ENCODE measurements at regions of chr1 and their contacts with region 1.

Region 1: GRCh38 chr1:39098546-39099250 is 72.5 kb downstream of the NDUFS5 start:
- DNase-seq: peak; percentile 81
- CTCF ChIP-seq: peak; percentile 84

Region 2: GRCh38 chr1:39086865-39087409 is 11.8 kb before region 1 on chr1:
- CTCF ChIA-PET with region 1: interaction called, 44 read pairs
- POLR2A ChIA-PET with region 1: no interaction called
- DNase-seq: no peak
- CTCF ChIP-seq: no peak

Region 3: GRCh38 chr1:39183503-39184353 is 85.0 kb after region 1 on chr1:
- CTCF ChIA-PET with region 1: interaction called, 127 read pairs
- POLR2A ChIA-PET with region 1: no interaction called
- DNase-seq: no peak
- CTCF ChIP-seq: peak; percentile 29

Region 4: DNA sequence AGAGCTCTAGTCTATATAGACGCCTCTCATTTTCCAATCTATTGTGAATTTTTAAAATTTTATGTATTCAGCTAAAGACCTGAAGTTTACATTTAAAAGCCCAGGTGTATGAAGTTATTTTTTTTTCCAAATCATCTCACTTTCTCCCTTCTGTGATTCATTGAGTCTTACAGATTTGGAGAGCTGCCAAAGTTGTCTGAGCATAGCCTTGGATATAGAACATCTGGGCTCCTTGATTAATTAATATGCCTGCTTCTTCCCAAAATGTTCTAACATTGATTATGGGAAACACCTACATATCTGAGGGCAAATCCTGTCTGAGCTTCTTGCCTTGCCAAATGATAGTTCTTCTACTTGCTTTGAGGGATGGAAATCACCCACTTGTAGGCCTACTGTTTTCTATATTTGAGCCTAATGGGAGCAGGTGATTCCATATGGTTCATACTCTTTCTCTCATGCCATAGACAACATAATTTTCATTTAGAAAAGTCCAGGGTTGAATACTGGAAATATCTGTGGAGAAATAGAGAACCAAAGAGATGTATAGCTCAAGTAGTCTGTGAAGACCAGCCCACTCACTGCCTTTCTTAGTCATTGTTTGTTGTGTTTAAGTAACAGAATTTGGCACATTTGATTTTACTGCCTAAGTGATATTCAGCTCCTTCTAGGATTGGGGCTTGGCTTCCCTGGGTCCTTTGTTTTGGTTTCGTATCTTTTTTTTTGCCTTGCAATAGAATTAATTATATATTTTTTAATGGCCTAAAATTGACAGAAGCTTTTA is 152.0 kb after region 1 on chr1:
- CTCF ChIA-PET with region 1: interaction called, 126 read pairs
- POLR2A ChIA-PET with region 1: no interaction called
- DNase-seq: no peak
- CTCF ChIP-seq: no peak

Region 5: GRCh38 chr1:39387452-39387851 is 288.8 kb after region 1 on chr1:
- CTCF ChIA-PET with region 1: interaction called, 10 read pairs
- POLR2A ChIA-PET with region 1: no interaction called
- DNase-seq: no peak
- CTCF ChIP-seq: no peak

Measured in GM10248 (cell line).